Activated T-helper 1 cell treated with anti-CD3 and anti-CD28 coated beads, Interleukin-12 subunit alpha, Interleukin-12 subunit beta, Interleukin-2, Interleukin-4 antibody, amounts not matched to agents 30 ng/mL and 10 ng/mL and 1 ng/mL, durations not matched to agents 14 hours and 24 hours and 36 hours (primary cell): ENCODE measurements at regions of chrX and their contacts with region 1.

Region 1: GRCh38 chrX:66039944-66040343 is at the start of gene VSIG4:
- DNase-seq: no peak
- H3K4me3 Mint-ChIP-seq: no peak within 1 kb of the TSS
- H3K27ac Mint-ChIP-seq: no peak within 1 kb of the TSS
- H3K4me1 Mint-ChIP-seq: peaks cover 9% of the 10 kb centered on the region
- H3K27me3 Mint-ChIP-seq: no peaks in the 10 kb centered on the region
- total RNA-seq, gene VSIG4: not detected in 2 replicates

Region 2: DNA sequence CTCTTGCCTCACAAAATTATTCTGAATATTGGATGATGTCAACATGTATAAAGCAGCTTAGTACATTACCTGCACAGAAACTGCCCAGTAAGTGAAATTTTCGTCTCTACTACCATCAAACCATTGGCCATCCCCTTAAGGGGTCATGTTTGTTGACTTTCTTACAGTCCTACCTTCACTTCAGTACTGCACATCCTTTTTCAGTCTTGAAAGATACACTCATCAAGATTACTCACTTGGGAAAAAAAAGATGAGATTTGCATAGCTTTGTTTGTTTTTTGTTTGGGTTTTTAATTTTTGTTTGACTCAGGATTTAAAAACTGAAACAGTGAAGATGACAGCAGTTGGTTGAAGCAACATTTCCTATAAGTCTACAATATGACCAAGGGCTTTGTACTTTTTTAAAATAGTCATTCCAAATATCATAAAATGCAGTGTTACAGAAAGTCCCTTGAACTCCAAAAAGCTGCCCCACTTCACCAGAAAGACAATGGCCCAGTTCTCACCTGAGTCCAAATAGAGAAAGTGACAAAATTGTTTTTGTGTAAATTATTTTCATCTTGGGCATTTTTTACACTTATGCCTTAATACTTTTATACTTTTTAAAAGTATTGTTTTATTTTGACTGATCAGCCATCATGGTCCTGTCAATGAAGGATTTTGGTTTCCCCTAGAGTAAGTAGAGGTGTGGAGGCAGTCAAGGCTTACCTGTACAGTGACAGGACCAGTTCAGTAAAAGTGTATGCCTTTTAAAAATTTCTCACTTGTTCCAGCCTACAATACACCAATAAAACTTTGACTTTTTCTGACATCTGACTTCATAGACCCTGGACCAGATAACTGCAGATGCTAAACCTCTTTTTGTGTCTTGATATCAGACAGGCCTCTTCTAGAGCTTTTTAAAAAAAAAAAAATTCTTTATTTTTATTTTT is 658.6 kb after region 1 on chrX:
- intact Hi-C with region 1: loop called (anchors 5 kb)
- DNase-seq: no peak
- H3K4me3 Mint-ChIP-seq: no peak overlapping the region
- H3K27ac Mint-ChIP-seq: no peak overlapping the region
- H3K4me1 Mint-ChIP-seq: no peaks in the 10 kb centered on the region
- H3K27me3 Mint-ChIP-seq: no peaks in the 10 kb centered on the region